ENCODE measurements at regions of chr3 and their contacts with region 1.

Region 1: DNA sequence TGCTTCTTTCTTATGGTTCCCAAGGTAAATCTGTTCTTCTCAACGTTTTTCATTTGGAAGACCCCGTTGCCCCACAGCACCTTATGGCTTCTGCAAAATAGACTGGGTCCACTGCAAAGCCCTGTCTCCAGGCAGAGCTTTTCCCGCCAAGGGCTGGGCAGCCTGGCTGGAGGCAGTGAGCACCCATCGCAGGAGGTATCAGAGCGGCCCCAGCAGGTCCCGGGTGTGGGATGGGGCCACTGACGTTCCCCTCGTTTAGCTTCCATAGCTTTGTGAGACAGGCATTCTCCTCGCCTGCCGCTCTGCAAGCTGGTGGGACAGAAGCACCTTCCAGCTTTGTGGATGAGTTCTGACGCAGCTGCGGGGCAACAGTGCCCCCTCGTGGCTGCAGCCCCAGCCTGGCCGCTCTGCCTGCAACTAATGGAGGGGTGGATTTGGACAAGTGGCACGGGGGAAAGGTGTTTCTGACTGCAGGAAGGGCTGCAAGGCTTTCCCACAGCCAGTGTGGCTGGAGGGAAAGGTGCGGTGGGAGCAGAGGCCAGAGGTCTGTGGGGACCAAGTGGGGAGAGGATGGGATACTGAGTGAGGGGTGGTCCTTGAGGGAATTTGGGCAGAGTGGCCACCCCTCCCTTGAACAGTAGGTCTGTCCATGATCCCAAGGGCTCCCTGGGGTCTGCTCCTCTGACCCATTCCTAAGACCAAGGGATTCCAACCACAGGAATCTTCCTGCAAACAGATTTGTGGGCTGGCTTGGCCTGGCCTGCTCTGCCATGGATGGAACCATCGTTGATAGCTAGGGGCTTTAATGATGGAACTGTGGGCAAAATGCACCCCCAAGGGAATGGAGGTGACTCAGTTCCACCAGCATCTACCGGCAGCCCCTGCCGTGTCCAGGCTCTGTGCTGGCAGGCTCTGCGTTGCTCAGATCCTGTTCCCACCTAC is 99.4 kb downstream of the FBLN2 start:
- H3K4me3 ChIP-seq: no peak overlapping the region
- H3K27ac ChIP-seq: no peak overlapping the region
- H3K4me1 ChIP-seq: no peaks in the 10 kb centered on the region
- CTCF ChIP-seq: peak; percentile 98

Region 2: GRCh38 chr3:13479581-13480339 is 168.6 kb before region 1 on chr3 and contains the start of gene HDAC11:
- CTCF ChIA-PET with region 1: interaction called, 17 read pairs
- POLR2A ChIA-PET with region 1: no interaction called
- H3K4me3 ChIP-seq: peak within 1 kb of the TSS; percentile 52
- H3K27ac ChIP-seq: no peak within 1 kb of the TSS; the same call in 1 of the 2 replicates
- H3K4me1 ChIP-seq: peaks cover 3% of the 10 kb centered on the region
- CTCF ChIP-seq: no peak; the same call in 1 of the 2 replicates

Region 3: GRCh38 chr3:13495921-13496723 is 152.2 kb before region 1 on chr3:
- CTCF ChIA-PET with region 1: interaction called, 219 read pairs
- POLR2A ChIA-PET with region 1: interaction called, 14 read pairs
- H3K4me3 ChIP-seq: no peak overlapping the region
- H3K27ac ChIP-seq: no peak overlapping the region
- H3K4me1 ChIP-seq: no peaks in the 10 kb centered on the region
- CTCF ChIP-seq: peak; percentile 83

Region 4: DNA sequence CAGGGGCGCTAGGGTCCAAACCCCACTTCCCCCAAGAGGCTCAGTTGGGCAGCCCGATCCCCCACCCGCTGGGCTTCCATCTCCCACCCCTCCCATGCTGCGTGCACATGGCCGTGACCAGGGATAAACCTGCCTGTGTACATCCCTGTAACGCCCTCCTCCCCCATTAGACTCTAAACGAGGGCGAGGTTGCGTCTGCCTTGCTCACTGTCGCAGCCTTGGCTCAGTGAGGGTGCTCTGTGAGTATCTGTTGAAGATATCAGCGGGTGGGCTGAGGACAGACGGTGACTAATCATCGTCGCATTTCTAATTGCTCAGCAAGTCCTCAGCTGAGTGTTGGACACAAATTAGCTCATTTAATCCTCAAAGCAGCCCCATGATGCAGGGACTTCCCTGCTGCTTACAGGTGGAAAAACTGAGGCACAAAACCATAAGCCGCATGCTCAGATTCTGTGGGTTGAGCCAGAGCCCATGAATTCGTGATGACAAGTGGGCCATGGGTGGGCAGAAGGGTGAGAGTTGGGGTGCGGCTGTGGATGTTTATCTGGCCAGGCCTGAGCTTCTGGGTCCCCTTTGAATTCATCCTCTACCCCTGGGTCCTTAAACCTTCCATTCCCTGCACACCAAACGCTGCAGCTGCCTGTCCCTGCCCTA is 73.4 kb before region 1 on chr3:
- CTCF ChIA-PET with region 1: interaction called, 14 read pairs
- POLR2A ChIA-PET with region 1: no interaction called
- H3K4me3 ChIP-seq: no peak overlapping the region
- H3K27ac ChIP-seq: no peak overlapping the region
- H3K4me1 ChIP-seq: peaks cover 5% of the 10 kb centered on the region
- CTCF ChIP-seq: no peak

Region 5: GRCh38 chr3:13682331-13683013 is 34.1 kb after region 1 on chr3:
- CTCF ChIA-PET with region 1: no interaction called
- POLR2A ChIA-PET with region 1: no interaction called
- H3K4me3 ChIP-seq: no peak overlapping the region
- H3K27ac ChIP-seq: no peak overlapping the region
- H3K4me1 ChIP-seq: no peaks in the 10 kb centered on the region
- CTCF ChIP-seq: no peak

Region 6: GRCh38 chr3:13839726-13840320 is 191.5 kb after region 1 on chr3:
- CTCF ChIA-PET with region 1: no interaction called
- POLR2A ChIA-PET with region 1: no interaction called
- H3K4me3 ChIP-seq: no peak overlapping the region
- H3K27ac ChIP-seq: no peak overlapping the region
- H3K4me1 ChIP-seq: no peaks in the 10 kb centered on the region
- CTCF ChIP-seq: no peak

Measured in HEK293 (cell line).